ENCODE measurements at regions of chr16 and their contacts with region 1.

Region 1: GRCh38 chr16:75206749-75207451 is at the start of gene CTRB2:
- DNase-seq: no peak
- H3K4me3 ChIP-seq: no peak within 1 kb of the TSS
- H3K27ac ChIP-seq: peak within 1 kb of the TSS in 1 of 3 donors; percentile 6
- H3K4me1 ChIP-seq: peaks cover 0 to 11% of the 10 kb centered on the region in 2 donors
- H3K27me3 ChIP-seq: no peaks in the 10 kb centered on the region
- CTCF ChIP-seq: no peak
- POLR2A ChIP-seq: no peak
- total RNA-seq, gene CTRB2: not detected

Region 2: DNA sequence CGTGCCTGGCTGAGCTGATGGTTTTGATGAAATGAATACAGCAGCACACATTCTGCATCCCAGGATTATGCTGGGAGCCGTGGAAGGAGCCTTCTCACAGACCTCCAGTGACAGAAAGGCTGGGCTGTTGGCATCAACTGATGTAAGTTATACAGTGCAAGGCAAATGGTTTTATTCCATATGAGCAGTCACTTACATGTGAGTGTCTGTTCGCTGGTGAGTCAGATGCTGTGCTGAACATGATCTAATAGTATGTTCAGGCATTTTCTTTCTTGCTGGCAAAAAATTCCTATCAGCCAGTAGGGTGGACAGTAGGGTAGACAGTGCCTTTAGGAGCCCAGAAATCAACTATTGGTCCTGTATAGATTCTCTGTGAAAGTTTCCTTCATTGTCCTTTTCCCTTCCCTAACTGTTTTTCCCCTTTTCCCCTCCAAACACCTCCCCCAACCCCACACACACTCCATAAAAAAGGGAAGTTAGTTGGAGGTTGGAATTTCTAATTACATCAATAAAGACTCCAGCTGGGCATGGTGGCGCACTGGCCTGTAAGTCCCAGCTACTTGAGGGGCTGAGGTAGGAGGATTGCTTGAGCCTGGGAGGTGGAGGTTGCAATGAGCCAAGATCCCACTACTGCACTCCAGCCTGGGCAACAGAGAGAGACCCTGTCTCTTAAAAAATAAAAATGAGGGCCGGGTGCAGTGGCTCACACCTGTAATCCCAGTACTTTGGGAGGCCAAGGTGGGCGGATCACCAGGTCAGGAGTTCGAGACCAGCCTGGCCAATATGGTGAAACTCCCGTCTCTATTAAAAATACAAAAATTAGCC is 126.5 kb before region 1 on chr16:
- intact Hi-C with region 1: no loop called
- DNase-seq: no peak
- H3K4me3 ChIP-seq: no peak overlapping the region
- H3K27ac ChIP-seq: no peak overlapping the region
- H3K4me1 ChIP-seq: peaks cover 16 to 22% of the 10 kb centered on the region in 2 donors
- H3K27me3 ChIP-seq: no peaks in the 10 kb centered on the region
- CTCF ChIP-seq: no peak
- POLR2A ChIP-seq: no peak

Region 3: GRCh38 chr16:75130150-75130771 is 76.6 kb before region 1 on chr16:
- intact Hi-C with region 1: no loop called
- DNase-seq: peak; percentile 65 to 70
- H3K4me3 ChIP-seq: no peak overlapping the region
- H3K27ac ChIP-seq: peak overlapping the region; percentile 21 to 57 (median 56)
- H3K4me1 ChIP-seq: peaks cover 9 to 13% of the 10 kb centered on the region in 2 donors
- H3K27me3 ChIP-seq: no peaks in the 10 kb centered on the region
- CTCF ChIP-seq: peak in 4 of 6 experiments; percentile 23 to 50 (median 38)
- POLR2A ChIP-seq: no peak

Region 4: DNA sequence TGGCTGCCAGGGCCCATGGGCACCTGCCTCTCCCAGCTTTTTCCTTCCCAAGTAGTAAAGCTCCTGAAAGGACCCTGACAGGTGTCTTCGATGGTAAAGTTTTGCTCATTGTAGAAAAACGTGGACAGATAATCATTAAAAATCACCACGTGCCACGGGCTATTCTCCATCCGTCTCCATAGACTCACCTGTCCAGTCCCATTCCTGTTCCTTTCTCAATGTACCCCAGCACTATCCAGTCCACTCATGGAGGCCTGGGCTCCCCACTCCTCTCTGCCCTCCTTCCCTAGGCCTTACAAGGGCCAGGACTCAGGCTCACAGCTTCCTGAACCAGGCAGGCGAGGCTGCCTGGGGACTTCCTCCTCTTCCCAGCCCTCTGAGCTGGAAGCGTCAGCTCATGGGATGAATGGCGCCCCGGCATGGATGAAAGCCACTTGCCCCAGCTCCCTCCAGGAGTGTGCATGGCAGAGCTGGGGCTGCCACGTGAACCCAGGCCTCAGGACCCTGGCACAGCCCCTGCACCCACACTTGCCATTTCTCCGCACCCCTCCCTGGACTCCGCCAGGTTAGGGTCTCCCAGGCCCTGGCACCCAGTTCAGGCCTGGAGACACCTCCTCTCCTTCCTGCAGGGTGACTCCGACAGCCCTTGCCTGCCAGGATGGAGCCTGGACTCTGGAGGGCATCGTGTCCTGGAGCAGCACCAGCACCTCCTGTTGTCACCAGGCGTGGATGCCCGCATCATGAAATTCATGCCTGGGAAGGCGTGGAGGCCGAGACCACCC is 20.7 kb after region 1 on chr16:
- intact Hi-C with region 1: loop called (anchors 2 kb)
- DNase-seq: no peak
- H3K4me3 ChIP-seq: no peak overlapping the region
- H3K27ac ChIP-seq: no peak overlapping the region
- H3K4me1 ChIP-seq: peaks cover 0 to 4% of the 10 kb centered on the region in 2 donors
- H3K27me3 ChIP-seq: no peaks in the 10 kb centered on the region
- CTCF ChIP-seq: no peak
- POLR2A ChIP-seq: no peak

Region 5: DNA sequence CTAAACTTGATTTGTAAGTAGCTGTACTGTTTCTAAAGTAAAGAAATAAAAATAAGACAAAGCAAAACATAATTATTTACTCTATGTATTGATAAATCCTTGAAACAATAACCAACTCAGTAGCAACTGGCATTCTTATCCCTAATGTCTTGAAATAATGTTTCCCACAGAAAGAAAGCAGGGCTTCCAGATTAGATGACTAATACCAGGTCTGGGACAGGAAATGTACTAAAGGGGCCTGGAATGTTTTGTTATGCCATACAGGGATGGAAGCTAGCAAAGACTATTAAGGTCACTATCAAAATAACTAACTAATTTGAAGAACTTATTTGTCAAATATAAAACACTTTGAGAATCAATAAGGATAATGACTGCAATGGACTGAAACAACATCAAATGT is 144.3 kb after region 1 on chr16:
- intact Hi-C with region 1: no loop called
- DNase-seq: no peak
- H3K4me3 ChIP-seq: no peak overlapping the region
- H3K27ac ChIP-seq: no peak overlapping the region
- H3K4me1 ChIP-seq: no peaks in the 10 kb centered on the region
- H3K27me3 ChIP-seq: no peaks in the 10 kb centered on the region
- CTCF ChIP-seq: no peak
- POLR2A ChIP-seq: no peak

Measured in thyroid gland (tissue), 4 donors.